Activated naive CD8-positive, alpha-beta T cell treated with anti-CD3 and anti-CD28 coated beads, Interleukin-2, amount 10 ng/mL, durations not matched to agents 7 days and 5 days (primary cell): ENCODE measurements at regions of chr16 and their contacts with region 1.

Region 1: GRCh38 chr16:89686520-89687091 is at the start of gene CDK10:
- DNase-seq: peak; percentile 98
- ATAC-seq: peak; percentile 88
- H3K4me3 Mint-ChIP-seq: peak within 1 kb of the TSS; percentile 96
- H3K27ac Mint-ChIP-seq: peak within 1 kb of the TSS; percentile 90
- H3K4me1 Mint-ChIP-seq: peaks cover 11% of the 10 kb centered on the region
- H3K27me3 Mint-ChIP-seq: no peaks in the 10 kb centered on the region
- total RNA-seq, gene CDK10: 103 to 104 TPM

Region 2: GRCh38 chr16:89700100-89700648 is 13.6 kb after region 1 on chr16:
- POLR2A ChIA-PET with region 1: interaction called, 18 read pairs
- DNase-seq: peak; percentile 95
- ATAC-seq: peak; percentile 15
- H3K4me3 Mint-ChIP-seq: peak overlapping the region; percentile 85
- H3K27ac Mint-ChIP-seq: peak overlapping the region; percentile 48
- H3K4me1 Mint-ChIP-seq: peaks cover 14% of the 10 kb centered on the region
- H3K27me3 Mint-ChIP-seq: no peaks in the 10 kb centered on the region